ENCODE measurements at regions of chr5 and their contacts with region 1.

Region 1: GRCh38 chr5:42583322-42583721 is 160.1 kb downstream of the GHR start:
- DNase-seq: peak; percentile 2
- ATAC-seq: peak; percentile 74
- H3K4me3 ChIP-seq: no peak overlapping the region
- H3K27ac ChIP-seq: no peak overlapping the region
- H3K4me1 ChIP-seq: no peaks in the 10 kb centered on the region
- H3K27me3 ChIP-seq: no peaks in the 10 kb centered on the region; a peak in 1 of 4 replicates
- CTCF ChIP-seq: peak; percentile 70 to 89 (median 79)
- EP300 ChIP-seq: no peak
- POLR2A ChIP-seq: no peak
- RAD21 ChIP-seq: peak; percentile 79

Region 2: GRCh38 chr5:41856644-41857491 is 726.5 kb before region 1 on chr5:
- CTCF ChIA-PET with region 1: interaction called, 12 read pairs
- POLR2A ChIA-PET with region 1: no interaction called
- RAD21 ChIA-PET with region 1: interaction called, 7 read pairs
- SMC1A ChIA-PET with region 1: interaction called, 3 read pairs
- in situ Hi-C with region 1: loop called (anchors 10 kb)
- intact Hi-C with region 1: loop called (anchors 1 kb)
- DNase-seq: no peak
- ATAC-seq: peak; percentile 98
- H3K4me3 ChIP-seq: no peak overlapping the region
- H3K27ac ChIP-seq: no peak overlapping the region
- H3K4me1 ChIP-seq: no peaks in the 10 kb centered on the region
- H3K27me3 ChIP-seq: no peaks in the 10 kb centered on the region
- CTCF ChIP-seq: peak; percentile 57 to 83 (median 75)
- EP300 ChIP-seq: no peak
- POLR2A ChIP-seq: no peak
- RAD21 ChIP-seq: peak; percentile 90

Region 3: GRCh38 chr5:42423285-42424165 is 159.8 kb before region 1 on chr5 and contains the start of gene GHR:
- CTCF ChIA-PET with region 1: interaction called, 31 read pairs
- POLR2A ChIA-PET with region 1: no interaction called
- RAD21 ChIA-PET with region 1: interaction called, 23 read pairs
- SMC1A ChIA-PET with region 1: interaction called, 32 read pairs
- in situ Hi-C with region 1: no loop called
- intact Hi-C with region 1: no loop called
- DNase-seq: no peak
- ATAC-seq: peak; percentile 72
- H3K4me3 ChIP-seq: no peak within 1 kb of the TSS
- H3K27ac ChIP-seq: no peak within 1 kb of the TSS
- H3K4me1 ChIP-seq: no peaks in the 10 kb centered on the region
- H3K27me3 ChIP-seq: peaks cover 0 to 3% of the 10 kb centered on the region in 2 experiments; a peak in 2 of 4 replicates
- CTCF ChIP-seq: peak; percentile 30 to 46 (median 30); a peak in 4 of 6 replicates
- EP300 ChIP-seq: no peak
- POLR2A ChIP-seq: no peak
- RAD21 ChIP-seq: peak; percentile 39; the same call in 1 of the 2 replicates
- polyA plus RNA-seq, gene GHR: 0.23 to 0.26 TPM

Region 4: DNA sequence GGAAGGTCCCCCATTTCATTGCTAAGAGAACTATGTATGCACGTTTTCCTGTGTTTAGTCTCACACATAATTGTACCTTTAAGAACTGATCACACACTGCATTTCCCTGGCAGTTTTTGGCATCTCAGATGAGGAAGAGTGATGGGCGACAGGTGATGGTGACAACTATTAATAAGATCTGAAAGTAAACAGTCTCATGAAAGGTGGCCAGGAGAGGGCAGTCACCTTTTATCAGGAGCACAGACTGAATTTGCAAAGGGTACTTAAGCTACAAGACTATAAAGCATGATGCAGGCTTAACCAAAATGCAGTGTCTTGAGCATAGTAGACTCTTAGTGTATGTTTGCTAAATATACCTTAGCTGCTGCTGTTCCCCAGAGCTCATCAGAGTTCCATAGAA is 68.6 kb before region 1 on chr5:
- CTCF ChIA-PET with region 1: interaction called, 28 read pairs
- POLR2A ChIA-PET with region 1: interaction called, 3 read pairs
- RAD21 ChIA-PET with region 1: interaction called, 5 read pairs
- SMC1A ChIA-PET with region 1: interaction called, 9 read pairs
- in situ Hi-C with region 1: no loop called
- intact Hi-C with region 1: no loop called
- DNase-seq: no peak
- ATAC-seq: peak; percentile 39; the same call in 2 of the 3 replicates
- H3K4me3 ChIP-seq: no peak overlapping the region
- H3K27ac ChIP-seq: no peak overlapping the region
- H3K4me1 ChIP-seq: no peaks in the 10 kb centered on the region
- H3K27me3 ChIP-seq: no peaks in the 10 kb centered on the region
- CTCF ChIP-seq: peak in 2 of 3 experiments; percentile 8 to 14; a peak in 2 of 6 replicates
- EP300 ChIP-seq: no peak
- POLR2A ChIP-seq: no peak
- RAD21 ChIP-seq: 0 out of 2 replicates have a peak, but pooled peaks have one; percentile 4

Region 5: GRCh38 chr5:42595597-42595996 is 12.3 kb after region 1 on chr5:
- CTCF ChIA-PET with region 1: interaction called, 11 read pairs
- POLR2A ChIA-PET with region 1: interaction called, 4 read pairs
- RAD21 ChIA-PET with region 1: interaction called, 4 read pairs
- SMC1A ChIA-PET with region 1: interaction called, 6 read pairs
- in situ Hi-C with region 1: no loop called
- intact Hi-C with region 1: no loop called
- DNase-seq: no peak
- ATAC-seq: no peak
- H3K4me3 ChIP-seq: no peak overlapping the region
- H3K27ac ChIP-seq: no peak overlapping the region
- H3K4me1 ChIP-seq: no peaks in the 10 kb centered on the region
- H3K27me3 ChIP-seq: no peaks in the 10 kb centered on the region
- CTCF ChIP-seq: no peak
- EP300 ChIP-seq: no peak
- POLR2A ChIP-seq: no peak
- RAD21 ChIP-seq: no peak

Region 6: GRCh38 chr5:42767491-42768105 is 184.3 kb after region 1 on chr5:
- CTCF ChIA-PET with region 1: interaction called, 24 read pairs
- POLR2A ChIA-PET with region 1: no interaction called
- RAD21 ChIA-PET with region 1: interaction called, 9 read pairs
- SMC1A ChIA-PET with region 1: interaction called, 3 read pairs
- in situ Hi-C with region 1: no loop called
- intact Hi-C with region 1: no loop called
- DNase-seq: no peak
- ATAC-seq: peak; percentile 53
- H3K4me3 ChIP-seq: no peak overlapping the region
- H3K27ac ChIP-seq: no peak overlapping the region
- H3K4me1 ChIP-seq: no peaks in the 10 kb centered on the region
- H3K27me3 ChIP-seq: no peaks in the 10 kb centered on the region
- CTCF ChIP-seq: peak; percentile 31 to 56 (median 42); a peak in 4 of 6 replicates
- EP300 ChIP-seq: no peak
- POLR2A ChIP-seq: no peak
- RAD21 ChIP-seq: peak; percentile 70

Region 7: GRCh38 chr5:42840269-42840668 is 256.9 kb after region 1 on chr5:
- CTCF ChIA-PET with region 1: no interaction called
- POLR2A ChIA-PET with region 1: no interaction called
- RAD21 ChIA-PET with region 1: no interaction called
- SMC1A ChIA-PET with region 1: no interaction called
- in situ Hi-C with region 1: no loop called
- intact Hi-C with region 1: no loop called
- DNase-seq: no peak
- ATAC-seq: no peak
- H3K4me3 ChIP-seq: no peak overlapping the region
- H3K27ac ChIP-seq: no peak overlapping the region
- H3K4me1 ChIP-seq: no peaks in the 10 kb centered on the region
- H3K27me3 ChIP-seq: 0 out of 4 replicates have a peak, but pooled peaks cover 0 to 2% of the 10 kb centered on the region in 2 experiments
- CTCF ChIP-seq: no peak
- EP300 ChIP-seq: no peak
- POLR2A ChIP-seq: no peak
- RAD21 ChIP-seq: no peak

Measured in GM12878 (cell line).